GM10248 (cell line): ENCODE measurements at regions of chr7 and their contacts with region 1.

Region 1: GRCh38 chr7:70720191-70720873 is 411.6 kb upstream of the GALNT17 start:
- DNase-seq: no peak
- CTCF ChIP-seq: peak; percentile 27

Region 2: DNA sequence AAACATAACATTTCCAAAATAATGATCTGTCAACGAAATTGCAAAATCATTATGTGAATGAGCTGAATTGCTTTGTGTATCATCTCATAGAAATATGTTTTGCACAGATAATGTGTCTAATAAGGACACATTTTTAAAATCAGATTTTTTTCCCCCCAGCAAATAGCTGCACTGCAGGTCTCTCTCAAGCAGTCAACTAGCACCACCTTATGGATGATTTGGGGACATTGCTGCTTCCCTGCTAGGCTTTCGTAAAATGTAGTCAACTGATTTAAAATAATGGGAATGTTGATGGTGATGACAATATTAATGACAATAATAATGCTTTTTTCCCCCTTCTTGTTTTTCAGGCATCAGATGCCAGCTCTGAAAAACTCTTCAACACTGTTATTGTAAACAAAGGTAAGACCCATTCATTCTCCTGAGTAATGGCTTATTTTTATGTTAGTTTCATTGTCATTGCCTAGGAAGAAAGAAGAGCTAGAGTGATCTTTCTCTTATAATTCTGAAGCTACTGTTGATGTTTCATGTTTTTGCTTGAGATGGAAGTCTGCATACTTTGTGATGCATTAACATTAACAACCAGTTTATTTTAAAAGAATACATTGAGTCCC is 22.0 kb before region 1 on chr7:
- CTCF ChIA-PET with region 1: interaction called, 91 read pairs
- POLR2A ChIA-PET with region 1: no interaction called
- DNase-seq: peak; percentile 45
- CTCF ChIP-seq: peak; percentile 84

Region 3: GRCh38 chr7:70752794-70753241 is 32.5 kb after region 1 on chr7:
- CTCF ChIA-PET with region 1: interaction called, 16 read pairs
- POLR2A ChIA-PET with region 1: no interaction called
- DNase-seq: no peak
- CTCF ChIP-seq: no peak

Region 4: DNA sequence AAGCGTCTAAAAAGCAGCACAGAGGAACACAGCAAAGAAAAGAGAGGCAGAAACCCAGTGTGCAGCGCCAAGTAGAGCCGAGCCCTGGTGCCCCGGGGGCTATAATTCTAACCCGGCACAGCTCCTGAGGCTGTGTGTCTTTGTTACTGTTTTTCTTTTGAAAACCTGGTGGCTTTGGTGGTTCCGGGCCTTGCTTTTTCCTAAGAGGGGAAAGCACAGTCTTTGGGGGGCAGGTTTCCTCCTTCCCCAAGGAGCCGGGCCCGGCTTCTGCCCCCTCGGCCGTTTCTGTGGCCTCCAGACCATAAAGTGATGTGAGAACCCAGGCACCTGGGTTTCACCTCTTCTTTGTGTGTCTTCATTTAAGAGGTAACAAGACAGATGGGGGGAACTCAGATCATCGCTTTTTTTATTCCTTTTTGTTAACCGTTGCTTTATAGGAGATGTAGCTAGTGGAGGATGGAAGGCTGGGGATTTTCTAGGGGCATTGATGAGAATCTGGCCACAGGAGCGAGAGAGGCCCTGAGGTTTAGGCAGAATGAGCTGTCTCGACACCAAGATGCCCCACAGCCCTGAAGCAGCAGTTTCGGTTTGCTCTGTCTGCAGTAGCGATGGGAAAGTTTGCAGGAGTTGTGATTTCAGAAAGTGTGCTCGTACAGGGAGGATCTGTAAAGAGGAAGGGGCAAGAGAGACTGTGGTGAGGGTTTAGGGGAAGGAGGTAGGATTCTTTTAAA is 43.8 kb after region 1 on chr7:
- CTCF ChIA-PET with region 1: interaction called, 20 read pairs
- POLR2A ChIA-PET with region 1: no interaction called
- DNase-seq: peak; percentile 75
- CTCF ChIP-seq: no peak

Region 5: DNA sequence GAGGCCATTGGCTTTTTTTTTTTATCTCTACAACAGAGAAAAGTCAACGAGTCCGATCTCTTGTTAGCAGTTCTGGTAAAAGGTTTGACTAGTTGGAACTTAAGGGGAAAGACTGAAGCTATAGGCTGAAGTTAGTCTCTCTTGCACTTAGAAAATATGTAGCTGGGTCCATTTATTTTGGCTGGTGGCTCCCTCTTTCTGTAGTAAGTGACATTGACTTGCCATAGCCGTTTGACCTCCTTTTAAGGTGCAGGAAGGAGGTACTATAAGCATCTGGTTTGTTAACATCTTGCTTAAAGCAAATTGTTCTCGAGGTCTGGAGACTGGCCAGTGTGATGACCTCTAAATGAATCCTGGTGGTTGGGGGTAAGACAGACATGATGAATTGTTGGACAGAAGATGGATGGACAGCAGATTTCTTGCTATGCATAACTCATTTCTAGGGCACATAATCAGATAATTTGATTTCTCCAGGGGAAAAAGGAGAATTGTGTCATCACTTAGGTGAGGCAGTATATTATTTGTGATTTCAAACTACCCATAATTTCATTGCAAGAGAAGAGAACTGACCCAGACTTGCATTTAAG is 55.3 kb after region 1 on chr7:
- CTCF ChIA-PET with region 1: interaction called, 30 read pairs
- POLR2A ChIA-PET with region 1: no interaction called
- DNase-seq: no peak
- CTCF ChIP-seq: peak; percentile 50

Region 6: GRCh38 chr7:70805360-70805759 is 85.0 kb after region 1 on chr7:
- CTCF ChIA-PET with region 1: no interaction called
- POLR2A ChIA-PET with region 1: no interaction called
- DNase-seq: no peak
- CTCF ChIP-seq: no peak

Region 7: GRCh38 chr7:71015252-71015900 is 295.0 kb after region 1 on chr7:
- CTCF ChIA-PET with region 1: no interaction called
- POLR2A ChIA-PET with region 1: no interaction called
- DNase-seq: no peak
- CTCF ChIP-seq: no peak